OCI-LY7 (cell line): ENCODE measurements at regions of chr4 and their contacts with region 1.

Region 1: GRCh38 chr4:24032371-24032989 is 142.6 kb upstream of the PPARGC1A start:
- DNase-seq: peak; percentile 10
- H3K4me3 ChIP-seq: no peak overlapping the region
- H3K27ac ChIP-seq: no peak overlapping the region
- H3K4me1 ChIP-seq: no peaks in the 10 kb centered on the region
- CTCF ChIP-seq: peak; percentile 57

Region 2: DNA sequence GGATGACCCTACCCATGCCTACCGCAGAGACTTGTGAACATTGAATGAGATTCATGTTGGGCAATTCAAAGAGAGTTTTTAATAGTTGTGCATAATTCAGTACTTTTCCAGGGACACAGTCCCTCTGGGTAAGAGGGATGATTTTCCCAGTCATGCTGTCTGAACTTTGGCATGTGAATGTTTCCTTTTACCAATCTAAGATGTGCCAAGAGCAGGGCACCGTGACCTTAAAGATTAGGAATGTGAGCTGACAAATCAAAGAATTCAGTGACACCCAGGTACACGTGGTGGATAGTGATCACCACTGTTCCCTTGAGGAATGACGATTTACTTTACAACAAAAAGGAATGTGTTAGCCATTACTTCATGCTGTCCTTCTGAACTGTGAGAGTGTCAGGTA is 658.2 kb before region 1 on chr4:
- CTCF ChIA-PET with region 1: no interaction called
- POLR2A ChIA-PET with region 1: no interaction called
- intact Hi-C with region 1: no loop called
- DNase-seq: no peak
- H3K4me3 ChIP-seq: no peak overlapping the region
- H3K27ac ChIP-seq: no peak overlapping the region
- H3K4me1 ChIP-seq: no peaks in the 10 kb centered on the region
- CTCF ChIP-seq: no peak

Region 3: DNA sequence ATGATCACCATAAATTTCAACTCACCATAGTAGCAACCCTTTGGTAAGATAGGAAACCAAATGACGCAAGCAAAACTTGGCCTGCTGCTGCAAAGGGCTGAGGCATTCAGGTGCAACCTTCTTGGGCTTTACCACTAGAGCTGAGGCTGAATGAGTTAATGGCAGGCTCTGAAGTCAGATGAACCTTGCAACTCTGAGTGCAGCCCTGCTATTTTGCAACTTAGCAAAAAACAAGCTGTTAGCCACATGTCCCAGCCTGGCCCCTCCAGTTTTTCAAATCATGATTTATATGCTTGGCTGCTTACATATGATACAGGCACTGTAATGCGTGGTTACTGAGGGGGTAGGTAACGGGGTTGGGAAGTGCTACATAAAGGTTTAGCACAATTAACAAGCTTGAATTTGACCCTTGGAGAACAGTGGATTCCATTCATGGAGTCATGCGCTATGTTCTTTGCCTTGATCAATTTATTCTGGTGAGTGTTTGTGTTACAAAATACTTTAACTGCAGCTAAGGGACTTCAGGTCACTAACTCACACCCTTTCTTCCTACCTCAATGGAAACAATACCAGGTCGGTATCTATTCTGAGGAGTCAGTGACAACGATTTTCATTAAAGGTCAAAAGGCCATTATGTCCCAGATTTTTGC is 62.2 kb before region 1 on chr4:
- CTCF ChIA-PET with region 1: no interaction called
- POLR2A ChIA-PET with region 1: interaction called, 3 read pairs
- intact Hi-C with region 1: loop called (anchors 5 kb)
- DNase-seq: peak; percentile 18
- H3K4me3 ChIP-seq: no peak overlapping the region
- H3K27ac ChIP-seq: no peak overlapping the region
- H3K4me1 ChIP-seq: peaks cover 35% of the 10 kb centered on the region
- CTCF ChIP-seq: no peak

Region 4: GRCh38 chr4:24174602-24175001 is 142.1 kb after region 1 on chr4:
- CTCF ChIA-PET with region 1: no interaction called
- POLR2A ChIA-PET with region 1: no interaction called
- intact Hi-C with region 1: no loop called
- DNase-seq: no peak
- H3K4me3 ChIP-seq: no peak overlapping the region
- H3K27ac ChIP-seq: no peak overlapping the region
- H3K4me1 ChIP-seq: no peaks in the 10 kb centered on the region
- CTCF ChIP-seq: no peak